ENCODE measurements at regions of chr1 and their contacts with region 1.

Region 1: DNA sequence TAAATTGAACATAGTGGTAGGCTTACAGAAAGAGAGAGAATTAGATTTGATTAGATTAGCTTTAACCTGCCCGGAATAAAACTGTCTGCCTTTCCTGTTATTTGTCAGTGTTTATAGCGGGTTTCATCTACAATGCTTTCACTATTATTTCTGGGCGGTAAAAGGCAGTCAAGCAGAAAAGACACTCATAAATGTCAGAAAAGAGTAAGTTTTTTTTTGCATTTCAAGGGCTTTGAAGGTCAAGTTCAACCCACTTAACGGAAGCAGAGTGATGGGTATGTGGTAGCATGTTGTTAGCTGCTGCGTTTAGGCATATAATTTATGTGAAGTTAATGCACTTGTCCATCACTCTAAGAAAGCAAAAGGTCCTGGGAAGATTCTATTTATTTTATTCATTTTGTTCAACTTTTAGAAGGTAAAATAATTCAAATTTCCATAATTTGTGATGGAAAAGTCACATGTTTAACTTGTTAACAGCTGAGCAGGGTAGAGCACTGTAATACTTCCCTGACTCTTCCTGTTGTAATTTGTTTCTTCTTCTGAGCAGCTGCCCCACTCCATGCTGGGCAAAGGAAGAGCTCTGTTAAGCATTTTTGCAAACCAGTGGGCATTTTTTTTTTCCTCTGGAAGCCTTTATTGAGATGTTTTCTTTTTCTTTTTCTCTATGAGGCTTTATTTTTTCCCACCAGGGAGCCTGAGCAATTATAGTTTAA is 220.1 kb downstream of the ST6GALNAC3 start:
- DNase-seq: no peak
- H3K4me3 Mint-ChIP-seq: peak overlapping the region; percentile 50
- H3K27ac Mint-ChIP-seq: peak overlapping the region; percentile 47
- H3K4me1 Mint-ChIP-seq: peaks cover 67% of the 10 kb centered on the region
- H3K27me3 Mint-ChIP-seq: no peaks in the 10 kb centered on the region

Region 2: DNA sequence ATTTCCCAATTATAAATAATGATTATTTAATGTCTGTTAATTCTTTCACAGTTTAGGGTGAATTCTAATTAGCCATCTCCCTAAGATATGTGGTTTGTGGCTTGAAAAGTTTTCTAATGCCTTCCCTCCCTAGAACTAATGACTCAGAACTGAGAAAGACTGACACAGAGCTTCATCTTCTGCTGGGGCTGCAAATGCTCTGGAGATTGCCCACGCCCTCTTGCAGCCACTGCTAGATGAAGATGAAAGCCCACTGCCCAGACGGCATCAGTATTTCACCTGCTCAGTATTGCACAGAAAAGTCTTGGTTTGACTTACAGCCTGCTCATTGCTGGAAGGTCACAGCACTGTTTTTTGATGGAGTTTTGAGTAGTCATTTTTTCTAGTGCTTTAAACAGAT is 118.6 kb before region 1 on chr1:
- CTCF ChIA-PET with region 1: no interaction called
- POLR2A ChIA-PET with region 1: no interaction called
- intact Hi-C with region 1: loop called (anchors 5 kb)
- DNase-seq: peak; percentile 62
- H3K4me3 Mint-ChIP-seq: no peak overlapping the region
- H3K27ac Mint-ChIP-seq: no peak overlapping the region
- H3K4me1 Mint-ChIP-seq: peaks cover 10% of the 10 kb centered on the region
- H3K27me3 Mint-ChIP-seq: peaks cover 5% of the 10 kb centered on the region

Region 3: DNA sequence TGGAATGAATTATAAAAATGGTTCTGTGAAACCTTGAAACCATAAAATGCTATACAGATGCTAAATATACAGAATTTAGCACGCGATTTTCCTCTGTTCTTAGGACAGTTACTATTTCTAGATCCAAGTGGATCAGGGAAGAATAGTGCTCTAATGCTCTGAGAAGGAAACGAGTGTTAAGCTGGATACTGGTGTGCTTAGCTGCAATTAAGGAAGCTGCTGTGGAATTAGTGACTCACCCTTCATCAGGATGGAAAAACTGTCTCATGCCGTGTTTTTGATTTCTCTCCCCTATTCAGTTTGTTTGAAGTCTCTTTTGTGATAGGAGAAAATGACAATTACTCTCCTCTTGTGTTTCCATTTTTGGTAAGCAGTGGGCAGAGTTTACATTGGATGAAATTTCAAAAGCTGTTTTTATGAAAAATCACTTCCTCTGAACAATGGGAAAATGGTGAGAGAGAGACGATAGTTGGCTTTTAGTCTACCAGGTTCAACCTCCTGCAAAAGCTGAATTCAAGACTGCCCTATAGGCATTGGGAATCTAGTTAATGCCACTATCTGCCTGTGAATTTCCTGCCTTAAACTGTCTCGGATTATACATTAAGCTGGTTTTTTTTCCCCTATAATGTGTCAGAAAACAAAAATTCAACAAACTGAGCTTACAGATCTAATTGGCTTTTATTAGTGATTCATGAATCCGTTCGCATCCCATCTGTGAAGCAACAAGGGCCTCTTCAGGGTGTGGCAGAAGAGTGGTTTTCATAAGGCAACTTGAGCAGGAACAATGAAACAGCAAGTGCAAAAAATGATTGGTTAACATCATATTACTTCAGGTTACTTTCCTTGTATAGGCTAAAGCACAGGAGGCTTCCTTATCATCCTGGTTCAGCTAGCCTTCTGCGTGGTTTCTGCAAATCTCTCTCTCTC is 40.3 kb before region 1 on chr1:
- CTCF ChIA-PET with region 1: no interaction called
- POLR2A ChIA-PET with region 1: no interaction called
- intact Hi-C with region 1: loop called (anchors 1 kb)
- DNase-seq: no peak
- H3K4me3 Mint-ChIP-seq: no peak overlapping the region
- H3K27ac Mint-ChIP-seq: no peak overlapping the region
- H3K4me1 Mint-ChIP-seq: peaks cover 40% of the 10 kb centered on the region
- H3K27me3 Mint-ChIP-seq: no peaks in the 10 kb centered on the region

Region 4: DNA sequence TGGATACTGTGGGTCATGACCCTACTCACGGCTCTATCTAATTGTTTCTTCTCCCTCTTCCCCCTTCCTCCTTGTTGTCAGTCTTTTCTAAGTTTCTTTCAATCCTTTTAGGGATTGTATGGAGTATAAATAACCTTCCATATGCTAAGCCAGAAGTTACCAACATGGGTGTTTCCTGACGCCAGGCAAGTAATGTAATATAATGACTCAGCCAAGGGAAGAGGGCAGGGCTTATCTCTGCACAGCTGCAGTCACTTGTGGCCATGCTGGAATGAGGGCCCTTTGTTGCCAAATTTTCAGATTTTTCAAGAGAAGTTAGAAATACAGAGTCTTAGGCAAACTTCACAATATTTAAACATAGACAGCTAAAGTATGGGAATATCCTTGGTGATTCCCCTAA is 25.5 kb before region 1 on chr1:
- CTCF ChIA-PET with region 1: no interaction called
- POLR2A ChIA-PET with region 1: no interaction called
- intact Hi-C with region 1: loop called (anchors 1 kb)
- DNase-seq: no peak
- H3K4me3 Mint-ChIP-seq: no peak overlapping the region
- H3K27ac Mint-ChIP-seq: no peak overlapping the region
- H3K4me1 Mint-ChIP-seq: peaks cover 48% of the 10 kb centered on the region
- H3K27me3 Mint-ChIP-seq: no peaks in the 10 kb centered on the region

Region 5: DNA sequence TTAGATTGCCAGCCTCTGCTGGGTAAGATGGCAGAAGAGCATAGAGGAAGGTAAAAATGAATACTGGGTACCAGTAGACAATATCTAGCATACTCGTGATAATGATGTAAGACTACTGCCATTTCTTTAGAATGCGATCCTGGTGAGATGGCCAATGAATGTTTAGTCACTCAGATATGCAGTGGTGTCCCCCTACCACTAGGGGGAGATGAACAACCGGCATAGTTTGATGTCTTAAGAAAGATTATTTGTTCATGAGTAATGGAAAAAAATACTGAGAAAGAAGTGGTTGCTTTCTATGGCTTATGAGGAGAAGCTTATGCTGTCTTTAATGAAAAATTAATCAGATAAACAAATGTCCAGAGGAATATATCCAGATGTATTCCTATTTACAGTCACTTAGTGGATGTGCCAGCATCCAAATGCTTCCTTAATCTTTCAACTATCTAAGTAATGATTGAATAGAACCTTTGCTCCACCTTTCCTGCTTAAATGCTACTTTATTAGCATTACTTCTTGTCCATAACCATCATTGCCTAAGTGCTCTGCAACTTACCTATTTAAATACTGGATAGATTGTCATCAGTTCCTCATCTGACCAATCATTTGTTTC is 36.5 kb after region 1 on chr1:
- CTCF ChIA-PET with region 1: no interaction called
- POLR2A ChIA-PET with region 1: no interaction called
- intact Hi-C with region 1: loop called (anchors 2 kb)
- DNase-seq: peak; percentile 46
- H3K4me3 Mint-ChIP-seq: no peak overlapping the region
- H3K27ac Mint-ChIP-seq: no peak overlapping the region
- H3K4me1 Mint-ChIP-seq: peaks cover 7% of the 10 kb centered on the region
- H3K27me3 Mint-ChIP-seq: no peaks in the 10 kb centered on the region

Region 6: DNA sequence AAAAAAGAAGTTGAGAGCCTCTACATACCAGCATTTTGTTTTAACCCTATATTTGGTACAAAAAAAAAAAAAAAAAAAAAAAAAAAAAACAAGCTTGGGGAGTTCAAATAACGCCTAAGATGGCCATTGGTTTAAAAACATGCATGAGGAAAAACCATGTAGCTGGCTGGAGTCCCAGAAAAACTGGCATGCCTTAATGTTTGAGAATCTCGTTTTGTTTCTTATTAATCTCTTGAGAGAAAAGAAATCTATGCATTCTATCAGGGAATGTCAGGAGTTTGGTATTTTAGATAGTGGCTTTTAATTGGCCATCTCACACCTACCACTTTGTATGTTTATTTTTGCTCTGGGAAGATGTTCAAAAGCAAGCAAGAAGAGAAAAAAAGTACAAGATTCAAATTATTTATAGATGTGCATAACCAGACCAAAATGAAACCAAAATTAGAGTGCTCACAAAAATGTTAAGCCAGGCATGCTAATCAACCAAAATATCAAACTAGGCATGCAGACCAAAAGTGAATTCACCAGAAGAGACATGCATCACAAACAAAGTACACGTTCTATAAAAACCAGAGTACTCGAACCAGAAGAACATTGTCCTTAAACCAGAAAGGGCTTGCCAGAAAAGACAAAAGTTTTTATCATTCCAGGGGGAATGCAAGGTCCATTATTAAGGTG is 1143.7 kb after region 1 on chr1:
- CTCF ChIA-PET with region 1: no interaction called
- POLR2A ChIA-PET with region 1: no interaction called
- intact Hi-C with region 1: loop called (anchors 10 kb)
- DNase-seq: no peak
- H3K4me3 Mint-ChIP-seq: peak overlapping the region; percentile 51
- H3K27ac Mint-ChIP-seq: peak overlapping the region; percentile 34
- H3K4me1 Mint-ChIP-seq: peaks cover 28% of the 10 kb centered on the region
- H3K27me3 Mint-ChIP-seq: no peaks in the 10 kb centered on the region

Measured in activated CD4-positive, alpha-beta memory T cell treated with anti-CD3 and anti-CD28 coated beads for 36 hours (primary cell).